ENCODE measurements at regions of chr1 and their contacts with region 1.

Region 1: DNA sequence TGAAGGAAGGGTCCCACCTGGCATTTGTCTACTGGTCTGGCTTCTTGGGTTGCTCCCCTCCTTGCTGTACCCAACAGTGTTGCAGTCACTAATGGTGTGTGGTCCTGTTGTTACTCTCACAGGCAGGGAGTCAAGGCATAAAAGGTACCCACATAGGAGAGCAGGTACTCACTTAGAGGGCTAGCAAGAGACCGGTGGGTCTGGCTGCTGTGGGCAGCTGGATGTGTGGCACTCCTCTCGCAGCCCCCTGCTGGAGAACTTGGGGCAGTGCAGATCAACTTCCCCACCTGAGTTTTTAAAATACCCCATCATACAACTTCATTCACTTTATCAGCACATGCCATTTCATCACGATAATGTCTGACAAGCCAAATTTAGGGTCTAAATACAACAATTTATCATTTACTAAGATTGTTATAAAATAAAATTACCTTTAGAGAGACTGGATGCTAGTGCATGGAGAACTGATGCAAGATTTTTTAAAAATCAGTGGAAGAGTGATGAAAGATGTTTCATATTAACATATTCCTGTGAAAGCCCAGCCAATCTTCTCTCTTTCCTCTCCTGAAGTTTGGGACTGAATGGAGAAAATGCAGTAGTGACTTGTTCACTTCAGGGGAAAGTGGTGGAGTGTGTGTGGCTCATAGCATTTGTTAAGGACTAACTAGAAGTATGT is 42.8 kb downstream of the ACP6 start:
- DNase-seq: peak in 1 of 2 donors; percentile 54
- ATAC-seq: peak in 1 of 2 donors; percentile 37
- H3K4me3 ChIP-seq: no peak overlapping the region
- H3K27ac ChIP-seq: no peak overlapping the region
- H3K4me1 ChIP-seq: peaks cover 31% of the 10 kb centered on the region in 2 donors
- H3K27me3 ChIP-seq: no peaks in the 10 kb centered on the region
- CTCF ChIP-seq: peak; percentile 77 to 89 (median 89)
- POLR2A ChIP-seq: no peak

Region 2: DNA sequence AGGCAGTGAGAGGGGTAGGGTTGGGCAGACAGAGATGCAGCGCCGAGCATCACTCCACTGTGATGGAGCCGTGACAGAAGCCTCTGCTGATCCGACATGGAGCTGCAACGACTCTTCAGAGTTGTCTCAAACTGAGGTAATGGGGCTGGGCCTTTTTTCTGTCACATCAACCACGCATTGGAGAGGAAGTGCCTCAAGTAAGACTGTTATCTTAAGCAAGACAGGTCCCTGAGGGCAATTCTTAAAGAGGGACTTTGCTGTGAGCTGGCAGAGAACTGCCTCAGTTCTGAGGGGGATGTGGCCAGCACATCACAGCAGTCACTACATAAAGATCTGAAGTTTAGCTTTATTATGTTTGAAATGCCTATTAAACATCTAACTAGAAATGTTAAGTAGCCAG is 140.7 kb before region 1 on chr1:
- in situ Hi-C with region 1: no loop called
- intact Hi-C with region 1: no loop called
- DNase-seq: no peak
- ATAC-seq: no peak
- H3K4me3 ChIP-seq: no peak overlapping the region
- H3K27ac ChIP-seq: no peak overlapping the region
- H3K4me1 ChIP-seq: no peaks in the 10 kb centered on the region
- H3K27me3 ChIP-seq: no peaks in the 10 kb centered on the region
- CTCF ChIP-seq: no peak
- POLR2A ChIP-seq: no peak

Region 3: DNA sequence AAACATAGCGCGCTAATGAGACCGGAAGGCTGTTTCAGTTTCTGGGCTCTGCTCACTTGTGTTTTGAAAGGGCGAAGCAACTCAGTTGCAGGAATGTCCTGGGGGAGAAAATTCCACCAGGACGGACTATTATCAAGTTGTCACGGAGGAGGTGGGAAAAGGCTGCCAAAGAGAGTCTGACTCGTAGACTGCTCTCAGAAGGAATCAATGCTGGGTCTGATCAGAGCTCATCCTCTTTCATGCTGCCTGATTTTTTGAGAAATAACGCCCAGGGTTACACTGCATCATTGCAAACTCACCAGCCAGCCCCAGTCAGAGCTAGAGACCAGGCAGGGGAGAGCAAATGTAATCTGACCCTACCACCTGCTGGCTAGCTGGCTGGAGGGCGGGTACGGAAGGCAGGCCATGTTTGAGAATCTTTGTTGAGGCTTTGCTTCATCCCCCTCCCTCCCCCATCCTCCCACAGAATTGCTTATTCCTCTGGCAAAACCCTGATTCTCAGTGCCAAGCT is 122.7 kb before region 1 on chr1:
- in situ Hi-C with region 1: loop called in 2 of 4 experiments (anchors 5 to 10 kb)
- intact Hi-C with region 1: no loop called
- DNase-seq: peak in 1 of 2 donors; percentile 49
- ATAC-seq: peak; percentile 56 to 95
- H3K4me3 ChIP-seq: peak overlapping the region in 2 of 4 donors; percentile 22 to 27
- H3K27ac ChIP-seq: peak overlapping the region in 1 of 4 donors; percentile 58
- H3K4me1 ChIP-seq: no peaks in the 10 kb centered on the region
- H3K27me3 ChIP-seq: no peaks in the 10 kb centered on the region
- CTCF ChIP-seq: no peak
- POLR2A ChIP-seq: no peak

Region 4: DNA sequence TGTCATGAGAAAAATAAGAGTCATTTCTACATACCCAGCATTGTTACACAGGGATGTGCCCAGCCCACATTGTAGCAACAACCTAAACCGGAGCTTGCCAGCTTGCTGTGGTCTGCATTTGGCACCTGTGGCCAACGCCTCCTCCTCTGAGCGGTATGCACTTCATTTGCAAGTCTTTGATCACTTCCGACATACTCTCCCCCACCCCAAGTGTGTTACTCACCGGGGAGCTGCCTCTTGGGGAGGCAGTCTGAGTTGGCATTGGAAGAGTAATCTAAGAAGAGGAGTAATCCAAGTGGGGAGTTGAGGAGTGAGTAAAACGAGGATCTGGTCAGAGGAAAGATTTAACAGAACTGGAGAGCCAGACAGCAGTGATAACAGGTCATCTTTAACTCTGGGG is 82.4 kb before region 1 on chr1:
- in situ Hi-C with region 1: no loop called
- intact Hi-C with region 1: loop called (anchors 2 kb)
- DNase-seq: peak; percentile 22 to 56
- ATAC-seq: peak; percentile 4 to 20
- H3K4me3 ChIP-seq: peak overlapping the region in 1 of 4 donors; percentile 2
- H3K27ac ChIP-seq: peak overlapping the region; percentile 62 to 99 (median 94)
- H3K4me1 ChIP-seq: peaks cover 40 to 47% of the 10 kb centered on the region in 2 donors
- H3K27me3 ChIP-seq: no peaks in the 10 kb centered on the region
- CTCF ChIP-seq: no peak
- POLR2A ChIP-seq: no peak

Region 5: GRCh38 chr1:147640553-147641165 is 13.1 kb after region 1 on chr1:
- in situ Hi-C with region 1: no loop called
- intact Hi-C with region 1: loop called (anchors 2 kb)
- DNase-seq: peak; percentile 52 to 78
- ATAC-seq: peak; percentile 92 to 97
- H3K4me3 ChIP-seq: no peak overlapping the region
- H3K27ac ChIP-seq: no peak overlapping the region
- H3K4me1 ChIP-seq: peaks cover 6 to 7% of the 10 kb centered on the region in 2 donors
- H3K27me3 ChIP-seq: no peaks in the 10 kb centered on the region
- CTCF ChIP-seq: peak; percentile 73 to 87 (median 76)
- POLR2A ChIP-seq: no peak

Region 6: GRCh38 chr1:147912553-147912952 is 285.0 kb after region 1 on chr1:
- in situ Hi-C with region 1: no loop called
- intact Hi-C with region 1: no loop called
- DNase-seq: no peak
- ATAC-seq: no peak
- H3K4me3 ChIP-seq: no peak overlapping the region
- H3K27ac ChIP-seq: no peak overlapping the region
- H3K4me1 ChIP-seq: no peaks in the 10 kb centered on the region
- H3K27me3 ChIP-seq: no peaks in the 10 kb centered on the region
- CTCF ChIP-seq: no peak
- POLR2A ChIP-seq: no peak

Measured in gastrocnemius medialis (tissue), 4 donors.